CD4-positive, alpha-beta memory T cell (primary cell): ENCODE measurements at regions of chr7 and their contacts with region 1.

Region 1: GRCh38 chr7:55432939-55433784 is 68.0 kb downstream of the LANCL2 start:
- DNase-seq: peak in 4 of 5 donors; percentile 34 to 45 (median 40)
- H3K4me3 ChIP-seq: no peak overlapping the region
- H3K4me3 Mint-ChIP-seq: no peak overlapping the region
- H3K27ac ChIP-seq: no peak overlapping the region
- H3K27ac Mint-ChIP-seq: peak overlapping the region in 1 of 7 donors; percentile 59
- H3K4me1 ChIP-seq: peaks cover 27% of the 10 kb centered on the region
- H3K4me1 Mint-ChIP-seq: peaks cover 18 to 37% (median 23%) of the 10 kb centered on the region in 4 donors
- H3K27me3 ChIP-seq: no peaks in the 10 kb centered on the region
- H3K27me3 Mint-ChIP-seq: no peaks in the 10 kb centered on the region

Region 2: DNA sequence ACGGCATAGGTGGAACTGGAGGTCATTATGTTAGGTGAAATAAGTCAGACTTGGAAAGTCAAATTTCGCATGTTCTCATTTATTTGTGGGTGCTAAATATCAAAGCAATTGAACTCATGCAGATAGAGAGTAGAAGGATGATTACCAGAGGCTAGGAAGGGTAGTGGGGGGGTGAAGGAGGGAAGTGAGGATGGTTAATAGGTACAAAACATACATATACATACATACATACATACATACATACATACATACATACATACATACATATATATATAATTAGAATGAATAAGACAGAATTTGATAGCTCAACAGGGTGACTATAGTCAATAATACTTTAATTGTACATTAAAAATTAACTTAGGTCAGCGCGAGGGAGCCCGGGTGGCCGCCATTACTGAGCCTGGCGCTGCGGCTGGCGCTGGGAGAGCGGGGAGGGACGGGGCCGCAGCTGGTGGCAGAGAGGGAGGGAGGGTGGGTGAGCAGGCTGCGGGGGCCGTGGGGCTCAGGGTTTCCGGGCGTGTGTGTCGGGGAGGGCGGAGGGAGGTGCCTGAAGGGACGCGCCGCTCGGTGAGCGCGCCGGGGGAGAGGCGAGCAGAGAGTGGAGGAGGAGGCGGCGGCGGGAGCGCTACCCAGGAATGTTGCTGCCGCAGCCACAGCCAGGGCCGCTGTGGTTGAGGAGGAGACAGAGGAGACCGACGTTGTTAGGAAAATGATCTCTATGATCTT is 500.2 kb before region 1 on chr7:
- CTCF ChIA-PET with region 1: no interaction called
- POLR2A ChIA-PET with region 1: no interaction called
- intact Hi-C with region 1: no loop called
- DNase-seq: no peak
- H3K4me3 ChIP-seq: no peak overlapping the region
- H3K4me3 Mint-ChIP-seq: peak overlapping the region in 3 of 8 donors; percentile 7 to 71 (median 44)
- H3K27ac ChIP-seq: no peak overlapping the region
- H3K27ac Mint-ChIP-seq: no peak overlapping the region
- H3K4me1 ChIP-seq: no peaks in the 10 kb centered on the region
- H3K4me1 Mint-ChIP-seq: peaks cover 0 to 11% (median 2%) of the 10 kb centered on the region in 4 donors
- H3K27me3 ChIP-seq: no peaks in the 10 kb centered on the region
- H3K27me3 Mint-ChIP-seq: peaks cover 15 to 18% of the 10 kb centered on the region in 2 donors

Region 3: DNA sequence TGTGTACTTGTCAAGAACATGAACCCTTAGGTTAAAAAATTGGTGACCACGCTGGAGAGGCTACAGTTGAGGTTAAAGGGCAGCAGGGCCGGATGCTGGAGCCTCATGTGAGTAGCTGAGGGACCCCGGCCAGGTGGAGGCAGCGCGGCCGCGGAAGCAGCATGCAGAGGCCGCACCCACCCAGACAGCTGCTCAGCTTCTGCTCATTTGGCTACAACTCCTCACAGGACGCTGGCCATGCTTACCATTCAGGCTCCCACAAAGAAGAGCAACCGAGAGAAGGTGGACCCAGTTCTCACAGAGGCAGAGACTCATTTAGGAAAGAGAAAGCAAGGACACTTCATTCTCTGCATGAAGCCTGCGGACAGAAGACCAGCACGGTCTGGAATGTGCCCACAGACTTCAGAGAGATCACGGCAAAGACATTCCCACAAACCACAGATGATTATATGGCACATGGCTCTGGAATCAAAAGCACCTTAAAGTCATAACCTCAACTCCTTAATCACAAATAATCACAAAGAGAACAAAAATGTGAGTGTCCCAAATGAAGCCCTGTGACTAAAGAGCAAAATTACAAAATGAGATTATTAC is 44.7 kb after region 1 on chr7:
- CTCF ChIA-PET with region 1: interaction called, 5 read pairs
- POLR2A ChIA-PET with region 1: no interaction called
- intact Hi-C with region 1: loop called (anchors 2 kb)
- DNase-seq: no peak
- H3K4me3 ChIP-seq: no peak overlapping the region
- H3K4me3 Mint-ChIP-seq: peak overlapping the region in 6 of 8 donors; percentile 5 to 72 (median 46)
- H3K27ac ChIP-seq: peak overlapping the region; percentile 4
- H3K27ac Mint-ChIP-seq: peak overlapping the region; percentile 10 to 82 (median 68)
- H3K4me1 ChIP-seq: peaks cover 83% of the 10 kb centered on the region
- H3K4me1 Mint-ChIP-seq: peaks cover 68 to 96% (median 77%) of the 10 kb centered on the region in 4 donors
- H3K27me3 ChIP-seq: no peaks in the 10 kb centered on the region
- H3K27me3 Mint-ChIP-seq: no peaks in the 10 kb centered on the region

Region 4: GRCh38 chr7:55593515-55594318 is 160.6 kb after region 1 on chr7:
- CTCF ChIA-PET with region 1: interaction called, 47 read pairs
- POLR2A ChIA-PET with region 1: no interaction called
- intact Hi-C with region 1: loop called (anchors 1 kb)
- DNase-seq: peak; percentile 50 to 67 (median 55)
- H3K4me3 ChIP-seq: no peak overlapping the region
- H3K4me3 Mint-ChIP-seq: no peak overlapping the region
- H3K27ac ChIP-seq: no peak overlapping the region
- H3K27ac Mint-ChIP-seq: no peak overlapping the region
- H3K4me1 ChIP-seq: peaks cover 17% of the 10 kb centered on the region
- H3K4me1 Mint-ChIP-seq: peaks cover 7 to 24% (median 15%) of the 10 kb centered on the region in 4 donors
- H3K27me3 ChIP-seq: no peaks in the 10 kb centered on the region
- H3K27me3 Mint-ChIP-seq: peaks cover 4 to 6% of the 10 kb centered on the region in 2 donors